Activated B cell treated with CpG ODN at 0.5 μM for 24 hours (primary cell): ENCODE measurements at regions of chr17 and their contacts with region 1.

Region 1: GRCh38 chr17:76868176-76868668 is at the start of gene MGAT5B:
- DNase-seq: peak; percentile 88
- ATAC-seq: peak; percentile 93
- H3K4me3 Mint-ChIP-seq: peak within 1 kb of the TSS; percentile 67
- H3K27ac Mint-ChIP-seq: no peak within 1 kb of the TSS
- H3K4me1 Mint-ChIP-seq: peaks cover 10% of the 10 kb centered on the region
- H3K27me3 Mint-ChIP-seq: peaks cover 38% of the 10 kb centered on the region
- CTCF ChIP-seq: no peak
- total RNA-seq, gene MGAT5B: 5.6 and 7.4 TPM in 2 replicates

Region 2: GRCh38 chr17:76714822-76715495 is 153.3 kb before region 1 on chr17:
- CTCF ChIA-PET with region 1: no interaction called
- POLR2A ChIA-PET with region 1: no interaction called
- intact Hi-C with region 1: no loop called
- DNase-seq: peak; percentile 56
- ATAC-seq: peak; percentile 29
- H3K4me3 Mint-ChIP-seq: peak overlapping the region; percentile 39
- H3K27ac Mint-ChIP-seq: peak overlapping the region; percentile 78
- H3K4me1 Mint-ChIP-seq: peaks cover 27% of the 10 kb centered on the region
- H3K27me3 Mint-ChIP-seq: no peaks in the 10 kb centered on the region
- CTCF ChIP-seq: peak; percentile 76

Region 3: DNA sequence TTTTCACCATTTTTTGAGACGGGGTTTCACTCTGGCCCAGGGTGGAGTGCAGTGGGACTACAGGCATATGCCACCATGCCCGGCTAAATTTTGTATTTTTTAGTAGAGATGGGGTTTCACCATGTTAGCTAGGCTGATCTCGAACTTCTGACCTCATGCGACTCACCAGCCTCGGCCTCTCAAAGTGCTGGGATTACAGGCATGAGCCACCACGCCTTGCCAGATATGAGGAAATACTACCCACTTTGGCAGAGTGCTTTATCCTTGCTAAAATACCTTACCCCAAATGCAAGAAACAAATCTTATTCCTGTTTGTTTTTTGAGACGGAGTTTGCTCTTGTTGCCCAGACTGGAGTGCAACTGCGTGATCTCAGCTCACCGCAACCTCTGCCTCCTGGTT is 62.9 kb before region 1 on chr17:
- CTCF ChIA-PET with region 1: no interaction called
- POLR2A ChIA-PET with region 1: no interaction called
- intact Hi-C with region 1: no loop called
- DNase-seq: no peak
- ATAC-seq: no peak
- H3K4me3 Mint-ChIP-seq: no peak overlapping the region
- H3K27ac Mint-ChIP-seq: no peak overlapping the region
- H3K4me1 Mint-ChIP-seq: no peaks in the 10 kb centered on the region
- H3K27me3 Mint-ChIP-seq: no peaks in the 10 kb centered on the region
- CTCF ChIP-seq: no peak

Region 4: GRCh38 chr17:76957678-76958464 is 89.6 kb after region 1 on chr17:
- CTCF ChIA-PET with region 1: interaction called, 3 read pairs
- POLR2A ChIA-PET with region 1: interaction called, 3 read pairs
- intact Hi-C with region 1: loop called (anchors 1 kb)
- DNase-seq: peak; percentile 42
- ATAC-seq: peak; percentile 91
- H3K4me3 Mint-ChIP-seq: peak overlapping the region; percentile 81
- H3K27ac Mint-ChIP-seq: peak overlapping the region; percentile 66
- H3K4me1 Mint-ChIP-seq: peaks cover 31% of the 10 kb centered on the region
- H3K27me3 Mint-ChIP-seq: peaks cover 2% of the 10 kb centered on the region
- CTCF ChIP-seq: no peak

Region 5: GRCh38 chr17:77054936-77055335 is 186.7 kb after region 1 on chr17:
- CTCF ChIA-PET with region 1: interaction called, 109 read pairs
- POLR2A ChIA-PET with region 1: interaction called, 21 read pairs
- intact Hi-C with region 1: loop called (anchors 1 kb)
- DNase-seq: no peak
- ATAC-seq: no peak
- H3K4me3 Mint-ChIP-seq: no peak overlapping the region
- H3K27ac Mint-ChIP-seq: no peak overlapping the region
- H3K4me1 Mint-ChIP-seq: peaks cover 3% of the 10 kb centered on the region
- H3K27me3 Mint-ChIP-seq: peaks cover 32% of the 10 kb centered on the region
- CTCF ChIP-seq: no peak

Region 6: GRCh38 chr17:77068915-77069314 is 200.7 kb after region 1 on chr17:
- CTCF ChIA-PET with region 1: interaction called, 62 read pairs
- POLR2A ChIA-PET with region 1: interaction called, 3 read pairs
- intact Hi-C with region 1: loop called (anchors 1 kb)
- DNase-seq: no peak
- ATAC-seq: no peak
- H3K4me3 Mint-ChIP-seq: no peak overlapping the region
- H3K27ac Mint-ChIP-seq: no peak overlapping the region
- H3K4me1 Mint-ChIP-seq: peaks cover 2% of the 10 kb centered on the region
- H3K27me3 Mint-ChIP-seq: peaks cover 32% of the 10 kb centered on the region
- CTCF ChIP-seq: no peak

Region 7: GRCh38 chr17:77214743-77215142 is 346.5 kb after region 1 on chr17:
- CTCF ChIA-PET with region 1: no interaction called
- POLR2A ChIA-PET with region 1: no interaction called
- intact Hi-C with region 1: no loop called
- DNase-seq: no peak
- ATAC-seq: no peak
- H3K4me3 Mint-ChIP-seq: no peak overlapping the region
- H3K27ac Mint-ChIP-seq: no peak overlapping the region
- H3K4me1 Mint-ChIP-seq: peaks cover 47% of the 10 kb centered on the region
- H3K27me3 Mint-ChIP-seq: no peaks in the 10 kb centered on the region
- CTCF ChIP-seq: no peak